Heart right ventricle (tissue), 16 donors: ENCODE measurements at regions of chr9 and their contacts with region 1.

Region 1: DNA sequence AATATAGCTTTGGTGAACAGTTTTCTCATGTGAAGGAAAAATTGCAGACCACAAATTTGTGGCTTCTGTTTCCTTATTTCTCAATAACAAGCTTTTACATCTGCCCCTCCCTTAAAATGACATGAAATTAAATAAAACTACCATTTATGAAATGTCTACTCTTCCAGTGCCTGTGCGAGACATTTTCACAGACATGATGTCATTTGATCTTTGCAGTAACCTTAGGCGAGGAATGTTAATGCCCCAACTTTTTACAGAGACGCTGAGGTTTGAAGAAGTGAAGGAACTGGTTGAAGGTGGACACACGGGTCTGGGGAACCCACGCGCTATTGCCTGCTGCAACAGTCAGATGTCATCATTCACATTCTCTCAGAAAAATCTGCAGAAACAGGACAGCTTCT is 61.5 kb downstream of the OSTF1 start:
- DNase-seq: no peak
- ATAC-seq: peak in 1 of 8 donors; percentile 33
- H3K4me3 ChIP-seq: no peak overlapping the region
- H3K27ac ChIP-seq: peak overlapping the region in 1 of 10 donors; percentile 62
- H3K4me1 ChIP-seq: peaks cover 0 to 70% (median 15%) of the 10 kb centered on the region in 9 donors
- H3K27me3 ChIP-seq: no peaks in the 10 kb centered on the region
- CTCF ChIP-seq: no peak

Region 2: DNA sequence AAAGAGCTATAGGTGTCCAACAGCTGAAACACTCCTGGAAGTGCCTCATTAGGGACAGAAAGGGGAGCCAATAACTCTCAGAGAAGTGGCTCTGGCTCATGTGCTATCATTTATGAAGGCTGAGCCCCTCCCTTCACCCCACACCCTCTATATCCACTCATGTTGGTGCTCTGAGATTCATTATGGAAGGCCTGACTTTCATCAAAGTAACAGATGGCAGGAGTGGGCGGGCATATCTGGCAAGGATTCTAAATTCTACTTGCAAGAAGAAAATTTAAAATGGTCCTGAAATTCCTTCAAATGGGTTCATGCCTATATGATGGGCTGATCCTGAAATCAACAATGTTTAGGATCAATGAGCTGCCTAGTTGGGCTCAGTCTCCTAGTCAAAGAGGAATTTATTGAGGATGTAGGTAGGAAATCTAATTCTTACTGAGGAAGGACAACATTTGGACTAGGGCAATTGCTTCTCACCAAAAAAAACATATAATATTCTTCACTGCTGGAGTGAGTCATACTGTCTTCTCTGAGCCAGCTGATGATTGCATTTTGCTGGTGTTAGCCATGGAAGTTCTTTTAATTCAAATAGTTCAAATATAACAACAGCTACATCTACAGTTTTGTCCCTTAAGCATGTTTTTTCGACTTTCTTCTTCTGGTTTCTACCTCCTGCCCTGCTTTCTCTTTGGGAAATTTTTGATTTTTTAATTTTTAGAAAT is 85.4 kb before region 1 on chr9:
- intact Hi-C with region 1: no loop called
- DNase-seq: no peak
- ATAC-seq: peak in 6 of 8 donors; percentile 27 to 60 (median 52)
- H3K4me3 ChIP-seq: no peak overlapping the region
- H3K27ac ChIP-seq: peak overlapping the region in 3 of 10 donors; percentile 2 to 28 (median 6)
- H3K4me1 ChIP-seq: peaks cover 0 to 5% (median 0%) of the 10 kb centered on the region in 9 donors
- H3K27me3 ChIP-seq: no peaks in the 10 kb centered on the region
- CTCF ChIP-seq: no peak

Region 3: GRCh38 chr9:75101096-75101495 is 48.7 kb before region 1 on chr9:
- intact Hi-C with region 1: loop called in 1 of 10 experiments (anchors 5 kb)
- DNase-seq: no peak
- ATAC-seq: peak in 2 of 8 donors; percentile 23 to 46
- H3K4me3 ChIP-seq: no peak overlapping the region
- H3K27ac ChIP-seq: peak overlapping the region in 3 of 10 donors; percentile 20 to 44 (median 26)
- H3K4me1 ChIP-seq: peaks cover 0 to 71% (median 32%) of the 10 kb centered on the region in 9 donors
- H3K27me3 ChIP-seq: no peaks in the 10 kb centered on the region
- CTCF ChIP-seq: no peak

Region 4: GRCh38 chr9:75213765-75214164 is 63.9 kb after region 1 on chr9:
- intact Hi-C with region 1: no loop called
- DNase-seq: no peak
- ATAC-seq: no peak
- H3K4me3 ChIP-seq: no peak overlapping the region
- H3K27ac ChIP-seq: no peak overlapping the region
- H3K4me1 ChIP-seq: no peaks in the 10 kb centered on the region
- H3K27me3 ChIP-seq: no peaks in the 10 kb centered on the region
- CTCF ChIP-seq: no peak

Region 5: GRCh38 chr9:75229605-75230332 is 79.9 kb after region 1 on chr9:
- intact Hi-C with region 1: no loop called
- DNase-seq: no peak
- ATAC-seq: peak in 1 of 8 donors; percentile 42
- H3K4me3 ChIP-seq: no peak overlapping the region
- H3K27ac ChIP-seq: no peak overlapping the region
- H3K4me1 ChIP-seq: no peaks in the 10 kb centered on the region
- H3K27me3 ChIP-seq: no peaks in the 10 kb centered on the region
- CTCF ChIP-seq: no peak